ENCODE measurements at regions of chr9 and their contacts with region 1.

Region 1: DNA sequence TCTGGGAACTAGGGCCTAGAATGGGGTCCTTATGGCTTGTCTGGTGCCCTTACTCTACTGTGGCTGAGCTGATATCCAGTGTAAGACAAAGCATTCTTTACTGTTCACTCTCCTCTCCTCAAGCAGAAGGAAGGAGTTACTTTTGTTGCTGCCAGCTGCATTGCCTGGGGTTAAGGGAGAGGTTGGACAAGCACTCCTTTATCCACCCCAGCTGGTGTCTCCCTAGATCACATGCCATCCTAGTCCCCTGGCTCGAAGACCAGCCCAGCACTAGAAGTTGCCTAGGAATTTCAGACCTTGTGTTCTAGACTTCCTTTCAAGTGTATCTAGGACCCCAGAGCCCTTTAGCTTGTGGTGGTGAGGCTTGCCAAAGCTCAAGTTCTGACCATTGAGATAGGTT is 1051.5 kb upstream of the C9orf72 start:
- DNase-seq: no peak
- ATAC-seq: no peak
- H3K4me3 ChIP-seq: no peak overlapping the region
- H3K4me3 Mint-ChIP-seq: no peak overlapping the region
- H3K27ac ChIP-seq: no peak overlapping the region
- H3K27ac Mint-ChIP-seq: no peak overlapping the region
- H3K4me1 ChIP-seq: no peaks in the 10 kb centered on the region
- H3K4me1 Mint-ChIP-seq: no peaks in the 10 kb centered on the region
- H3K27me3 ChIP-seq: no peaks in the 10 kb centered on the region
- H3K27me3 Mint-ChIP-seq: no peaks in the 10 kb centered on the region
- CTCF ChIP-seq: no peak

Region 2: GRCh38 chr9:28563291-28563934 is 61.4 kb before region 1 on chr9:
- CTCF ChIA-PET with region 1: no interaction called
- POLR2A ChIA-PET with region 1: no interaction called
- intact Hi-C with region 1: loop called in 1 of 2 experiments (anchors 10 kb)
- DNase-seq: no peak
- ATAC-seq: no peak
- H3K4me3 ChIP-seq: no peak overlapping the region
- H3K4me3 Mint-ChIP-seq: no peak overlapping the region
- H3K27ac ChIP-seq: no peak overlapping the region
- H3K27ac Mint-ChIP-seq: no peak overlapping the region
- H3K4me1 ChIP-seq: no peaks in the 10 kb centered on the region
- H3K4me1 Mint-ChIP-seq: no peaks in the 10 kb centered on the region
- H3K27me3 ChIP-seq: no peaks in the 10 kb centered on the region
- H3K27me3 Mint-ChIP-seq: no peaks in the 10 kb centered on the region
- CTCF ChIP-seq: no peak

Region 3: GRCh38 chr9:28607843-28608242 is 16.9 kb before region 1 on chr9:
- CTCF ChIA-PET with region 1: no interaction called
- POLR2A ChIA-PET with region 1: no interaction called
- intact Hi-C with region 1: loop called in 1 of 2 experiments (anchors 2 kb)
- DNase-seq: no peak
- ATAC-seq: no peak
- H3K4me3 ChIP-seq: no peak overlapping the region
- H3K4me3 Mint-ChIP-seq: no peak overlapping the region
- H3K27ac ChIP-seq: no peak overlapping the region
- H3K27ac Mint-ChIP-seq: no peak overlapping the region
- H3K4me1 ChIP-seq: no peaks in the 10 kb centered on the region
- H3K4me1 Mint-ChIP-seq: no peaks in the 10 kb centered on the region
- H3K27me3 ChIP-seq: no peaks in the 10 kb centered on the region
- H3K27me3 Mint-ChIP-seq: no peaks in the 10 kb centered on the region
- CTCF ChIP-seq: no peak

Measured in CD8-positive, alpha-beta T cell (primary cell).